HCT116 (cell line): ENCODE measurements at regions of chr19 and their contacts with region 1.

Region 1: DNA sequence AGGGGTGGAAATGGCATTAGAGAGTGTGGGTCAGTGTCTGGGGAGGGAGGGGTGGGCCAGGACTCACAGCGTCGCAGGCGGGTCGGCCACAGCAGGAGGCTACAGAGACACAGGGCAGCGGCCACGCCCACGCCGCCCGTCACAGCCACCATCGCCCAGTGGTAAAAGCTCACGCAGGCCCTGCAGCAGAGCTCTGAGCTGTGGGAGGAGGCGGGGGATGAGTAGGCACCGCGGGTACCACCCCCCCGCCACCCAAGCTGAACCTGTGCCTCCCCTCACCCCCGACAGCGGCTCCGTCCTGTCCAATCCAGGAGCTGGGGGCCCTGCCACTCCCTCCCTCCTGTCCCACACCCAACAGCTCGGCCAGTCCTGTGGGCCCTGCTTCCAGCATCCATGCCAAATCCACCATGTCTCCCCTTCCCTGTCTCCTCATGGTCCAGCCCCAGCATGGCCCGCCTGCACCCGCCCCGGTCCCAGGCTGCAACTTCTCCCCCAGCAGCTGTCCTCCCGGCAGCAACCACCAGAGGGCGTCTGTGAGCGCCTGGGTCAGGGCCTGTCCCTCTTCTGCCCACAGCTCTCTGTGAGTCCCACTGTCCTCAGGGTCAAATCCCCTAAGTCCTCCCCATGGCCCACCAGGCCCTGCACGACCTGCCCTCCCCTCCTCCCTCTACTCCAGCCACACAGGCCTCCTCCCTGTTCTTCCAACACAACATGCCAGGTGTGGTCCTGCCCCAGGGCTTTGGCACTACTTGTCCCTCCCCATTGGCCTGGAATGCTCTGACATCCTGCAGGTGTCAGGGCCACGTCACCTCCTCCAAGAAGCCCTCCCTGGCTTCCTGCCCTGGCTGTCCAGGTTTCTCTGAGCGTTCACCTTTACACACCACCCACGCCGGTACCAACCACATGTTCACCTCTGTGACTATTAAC is 6.0 kb downstream of the TEKTIP1 start:
- DNase-seq: no peak
- ATAC-seq: peak; percentile 86
- H3K4me3 ChIP-seq: no peak overlapping the region
- H3K27ac ChIP-seq: peak overlapping the region; percentile 24; the same call in 1 of the 2 replicates
- H3K4me1 ChIP-seq: peaks cover 0 to 11% of the 10 kb centered on the region in 2 experiments; a peak in 2 of 4 replicates
- H3K27me3 ChIP-seq: no peaks in the 10 kb centered on the region
- CTCF ChIP-seq: peak; percentile 78 to 98 (median 91)
- POLR2A ChIP-seq: no peak
- RAD21 ChIP-seq: peak; percentile 82

Region 2: DNA sequence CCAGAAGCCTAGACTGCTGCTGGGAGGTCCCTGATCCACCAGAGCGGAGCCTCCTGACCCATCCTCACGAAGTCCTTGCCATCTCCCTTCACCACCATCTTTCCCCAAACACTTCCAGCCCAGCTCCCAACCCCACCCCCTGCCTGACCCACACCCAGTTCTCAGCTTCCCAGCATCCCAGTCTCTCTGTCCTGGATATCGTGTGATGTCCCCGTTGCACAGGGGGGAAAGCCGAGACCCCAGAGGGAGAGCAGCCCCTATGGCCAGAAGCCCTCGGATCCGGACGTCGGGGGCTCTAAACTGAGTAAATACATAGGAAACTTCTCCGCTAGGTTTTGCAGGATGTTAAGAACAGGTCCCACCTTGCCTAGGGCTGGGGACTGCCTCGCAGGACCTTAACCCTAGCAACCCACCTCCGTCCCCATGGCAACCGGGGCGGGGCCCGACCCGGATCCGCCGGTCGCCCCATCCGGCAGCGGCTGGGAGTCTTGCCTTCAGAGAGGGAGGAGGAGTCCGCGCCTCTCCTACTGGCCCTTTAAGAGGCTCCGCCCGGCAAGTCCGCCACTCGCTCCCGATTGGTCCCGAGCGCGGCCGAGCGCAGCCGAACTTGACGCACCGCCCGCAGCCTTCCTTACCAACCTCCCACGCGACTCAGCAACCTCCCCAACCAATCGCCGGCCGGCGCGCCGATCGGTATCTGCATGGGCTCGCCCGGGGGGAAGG is 27.3 kb after region 1 on chr19:
- CTCF ChIA-PET with region 1: interaction called, 11 read pairs
- POLR2A ChIA-PET with region 1: interaction called, 3 read pairs
- RAD21 ChIA-PET with region 1: interaction called in 1 of 2 experiments, 5 read pairs
- intact Hi-C with region 1: loop called (anchors 1 kb)
- DNase-seq: peak; percentile 99
- ATAC-seq: peak; percentile 83
- H3K4me3 ChIP-seq: peak overlapping the region; percentile 36 to 98
- H3K27ac ChIP-seq: peak overlapping the region; percentile 67
- H3K4me1 ChIP-seq: peaks cover 39 to 71% of the 10 kb centered on the region in 2 experiments
- H3K27me3 ChIP-seq: no peaks in the 10 kb centered on the region
- CTCF ChIP-seq: no peak
- POLR2A ChIP-seq: no peak
- RAD21 ChIP-seq: no peak

Region 3: GRCh38 chr19:3626473-3627350 is 81.7 kb after region 1 on chr19 and contains the start of gene CACTIN:
- CTCF ChIA-PET with region 1: no interaction called
- POLR2A ChIA-PET with region 1: no interaction called
- RAD21 ChIA-PET with region 1: no interaction called
- intact Hi-C with region 1: loop called (anchors 5 kb)
- DNase-seq: peak; percentile 96
- ATAC-seq: peak; percentile 96
- H3K4me3 ChIP-seq: peak within 1 kb of the TSS; percentile 98 to 100
- H3K27ac ChIP-seq: peak within 1 kb of the TSS; percentile 89
- H3K4me1 ChIP-seq: peaks cover 7 to 21% of the 10 kb centered on the region in 2 experiments; a peak in 3 of 4 replicates
- H3K27me3 ChIP-seq: no peaks in the 10 kb centered on the region
- CTCF ChIP-seq: no peak
- POLR2A ChIP-seq: peak; percentile 32
- RAD21 ChIP-seq: no peak
- total RNA-seq, gene CACTIN: 33.2 TPM

Region 4: GRCh38 chr19:3642987-3643673 is 98.1 kb after region 1 on chr19:
- CTCF ChIA-PET with region 1: no interaction called
- POLR2A ChIA-PET with region 1: no interaction called
- RAD21 ChIA-PET with region 1: no interaction called
- intact Hi-C with region 1: no loop called
- DNase-seq: peak; percentile 67
- ATAC-seq: peak; percentile 96
- H3K4me3 ChIP-seq: no peak overlapping the region
- H3K27ac ChIP-seq: no peak overlapping the region; the same call in 1 of the 2 replicates
- H3K4me1 ChIP-seq: peaks cover 3 to 10% of the 10 kb centered on the region in 2 experiments; a peak in 3 of 4 replicates
- H3K27me3 ChIP-seq: no peaks in the 10 kb centered on the region
- CTCF ChIP-seq: no peak
- POLR2A ChIP-seq: no peak
- RAD21 ChIP-seq: no peak